ENCODE measurements at regions of chr4 and their contacts with region 1.

Region 1: GRCh38 chr4:88439161-88439760 is 17.7 kb upstream of the HERC5 start:
- DNase-seq: peak in 1 of 2 donors; percentile 36
- H3K4me3 ChIP-seq: no peak overlapping the region
- H3K27ac ChIP-seq: peak overlapping the region in 1 of 2 donors; percentile 54
- H3K4me1 ChIP-seq: no peaks in the 10 kb centered on the region
- H3K27me3 ChIP-seq: no peaks in the 10 kb centered on the region
- CTCF ChIP-seq: no peak
- POLR2A ChIP-seq: no peak

Region 2: GRCh38 chr4:88456757-88457306 is 17.6 kb after region 1 on chr4 and contains the start of gene HERC5:
- intact Hi-C with region 1: loop called (anchors 1 kb)
- DNase-seq: peak; percentile 76 to 83
- H3K4me3 ChIP-seq: peak within 1 kb of the TSS; percentile 66 to 91 (median 82)
- H3K27ac ChIP-seq: peak within 1 kb of the TSS; percentile 70 to 86
- H3K4me1 ChIP-seq: no peaks in the 10 kb centered on the region
- H3K27me3 ChIP-seq: no peaks in the 10 kb centered on the region
- CTCF ChIP-seq: peak; percentile 31 to 67 (median 59)
- POLR2A ChIP-seq: no peak
- total RNA-seq, gene HERC5: 5.0 to 5.9 (median 5.9) TPM

Measured in breast epithelium (tissue), 4 donors.